T-cell (primary cell): ENCODE measurements at regions of chr4 and their contacts with region 1.

Region 1: DNA sequence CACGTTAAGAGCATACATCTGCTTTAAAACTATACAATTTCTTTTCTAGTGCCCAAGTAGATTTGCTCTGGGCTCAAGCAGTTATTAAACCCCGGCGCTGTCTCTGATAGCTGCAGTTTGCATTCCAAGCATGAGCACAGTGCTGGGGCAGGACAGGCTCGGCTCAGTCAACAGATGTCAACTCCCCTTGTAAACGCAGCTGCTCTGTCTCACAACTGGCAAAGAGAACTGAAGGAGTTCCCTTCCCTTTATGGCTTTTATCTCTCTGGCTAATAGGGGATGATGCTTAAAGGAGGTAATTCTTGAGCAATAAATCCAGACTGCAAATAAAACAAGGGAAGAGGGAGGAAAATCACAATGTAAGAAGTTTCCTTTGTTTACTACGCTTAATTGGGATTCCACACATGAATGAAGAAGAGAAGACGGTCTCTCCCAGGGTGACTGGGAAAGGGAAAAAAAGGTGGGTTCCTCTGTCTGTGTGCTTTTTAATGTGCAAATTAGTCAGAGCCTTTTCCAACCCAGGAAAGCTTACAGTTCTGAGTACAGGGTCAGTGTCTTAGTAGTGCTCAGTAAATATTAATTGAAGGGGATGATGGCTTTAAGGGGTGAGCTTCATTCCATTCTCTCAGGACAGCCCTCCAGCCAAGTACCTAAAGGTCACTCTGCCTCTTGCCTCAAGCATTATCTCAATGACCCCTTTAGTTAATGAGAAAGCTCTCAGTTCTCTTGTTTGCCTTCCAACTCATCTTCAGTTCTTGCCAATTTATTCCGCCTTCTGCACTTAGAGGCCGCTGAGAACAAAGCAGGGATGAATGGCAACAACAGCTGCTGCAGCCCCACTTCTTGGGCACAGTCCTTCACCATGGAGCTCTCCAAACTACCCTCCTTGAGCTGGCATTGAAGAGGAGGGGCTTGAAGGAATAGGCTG is 155.7 kb upstream of the JADE1 start:
- DNase-seq: no peak
- ATAC-seq: no peak
- H3K4me3 ChIP-seq: no peak overlapping the region
- H3K4me3 Mint-ChIP-seq: no peak overlapping the region
- H3K27ac ChIP-seq: no peak overlapping the region
- H3K27ac Mint-ChIP-seq: no peak overlapping the region
- H3K4me1 ChIP-seq: peaks cover 2% of the 10 kb centered on the region in 2 experiments
- H3K4me1 Mint-ChIP-seq: peaks cover 0 to 10% (median 6%) of the 10 kb centered on the region in 3 donors
- H3K27me3 ChIP-seq: no peaks in the 10 kb centered on the region
- H3K27me3 Mint-ChIP-seq: peaks cover 0 to 10% of the 10 kb centered on the region in 2 donors

Region 2: DNA sequence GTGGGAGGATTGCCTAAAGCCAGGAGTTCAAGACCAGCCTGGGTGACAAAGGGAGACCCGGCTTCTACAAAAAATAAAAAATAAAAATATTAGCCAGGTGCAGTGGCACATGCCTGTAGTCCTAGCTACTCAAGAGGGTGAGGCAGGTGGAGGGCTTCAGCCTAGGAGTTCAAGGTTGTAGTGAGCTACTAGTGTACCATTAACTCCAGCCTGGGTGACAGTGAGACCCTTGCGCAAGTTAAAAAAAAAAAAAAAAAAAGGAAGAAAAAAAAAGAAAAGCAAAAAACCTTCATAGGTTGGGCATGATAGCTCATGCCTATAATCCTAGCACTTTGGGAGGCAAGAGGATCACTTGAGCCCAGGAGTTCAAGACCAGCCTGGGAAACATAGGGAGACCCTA is 433.7 kb after region 1 on chr4:
- CTCF ChIA-PET with region 1: interaction called in 1 of 2 experiments, 11 read pairs
- POLR2A ChIA-PET with region 1: no interaction called
- DNase-seq: no peak
- ATAC-seq: no peak
- H3K4me3 ChIP-seq: no peak overlapping the region
- H3K4me3 Mint-ChIP-seq: no peak overlapping the region
- H3K27ac ChIP-seq: no peak overlapping the region
- H3K27ac Mint-ChIP-seq: no peak overlapping the region
- H3K4me1 ChIP-seq: peaks cover 13 to 22% of the 10 kb centered on the region in 2 experiments
- H3K4me1 Mint-ChIP-seq: peaks cover 40 to 42% (median 40%) of the 10 kb centered on the region in 3 donors
- H3K27me3 ChIP-seq: no peaks in the 10 kb centered on the region
- H3K27me3 Mint-ChIP-seq: no peaks in the 10 kb centered on the region